ENCODE measurements at regions of chr1 and their contacts with region 1.

Region 1: DNA sequence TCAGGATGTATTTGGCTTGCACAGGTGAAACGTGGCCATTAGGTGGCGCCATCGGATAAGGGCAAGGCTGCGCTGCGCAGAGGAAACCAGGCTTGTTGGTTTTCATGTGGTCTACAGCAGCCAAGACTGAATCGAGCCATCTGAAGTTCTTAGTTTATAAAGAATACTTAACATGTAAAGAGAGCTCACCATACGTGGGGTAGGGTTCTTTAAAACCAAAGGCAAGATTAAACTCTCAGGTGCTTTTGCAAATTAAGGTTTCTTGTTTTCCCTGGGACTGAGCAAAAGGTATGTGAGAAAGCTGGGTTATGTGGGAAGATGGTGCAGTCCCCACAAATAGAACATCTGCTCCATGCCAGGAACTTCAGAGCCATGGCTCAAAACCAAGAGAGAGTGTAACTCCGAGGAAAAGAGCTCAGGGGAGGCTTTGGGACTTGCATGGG is 9.3 kb downstream of the MASP2 start:
- DNase-seq: peak; percentile 68
- H3K4me3 ChIP-seq: no peak overlapping the region
- H3K27ac ChIP-seq: no peak overlapping the region
- H3K4me1 ChIP-seq: no peaks in the 10 kb centered on the region
- H3K27me3 ChIP-seq: no peaks in the 10 kb centered on the region
- CTCF ChIP-seq: peak; percentile 98 to 99

Region 2: DNA sequence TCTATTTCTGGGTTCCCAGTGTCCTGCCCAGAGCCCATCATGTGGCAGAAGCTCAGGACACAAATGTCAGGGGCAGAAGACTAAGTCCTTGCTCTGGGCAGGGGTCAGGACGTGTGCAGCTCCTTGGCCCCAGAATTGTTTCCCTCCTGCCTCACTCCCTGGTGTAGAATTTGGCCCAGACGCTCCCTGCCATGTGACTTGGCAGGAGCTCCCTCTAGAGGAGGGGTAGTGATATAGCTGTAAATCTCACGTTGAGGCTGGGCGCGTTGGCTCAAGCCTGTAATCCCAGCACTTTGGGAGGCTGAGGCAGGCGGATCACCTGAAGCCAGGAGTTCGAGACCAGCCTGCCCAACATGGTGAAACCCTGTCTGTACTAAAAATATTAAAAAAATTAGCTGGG is 326.4 kb after region 1 on chr1:
- CTCF ChIA-PET with region 1: no interaction called
- dilution Hi-C with region 1: no loop called
- in situ Hi-C with region 1: no loop called
- intact Hi-C with region 1: loop called (anchors 1 kb)
- DNase-seq: no peak
- H3K4me3 ChIP-seq: no peak overlapping the region
- H3K27ac ChIP-seq: no peak overlapping the region
- H3K4me1 ChIP-seq: no peaks in the 10 kb centered on the region
- H3K27me3 ChIP-seq: peaks cover 4% of the 10 kb centered on the region
- CTCF ChIP-seq: peak; percentile 32 to 58

Region 3: DNA sequence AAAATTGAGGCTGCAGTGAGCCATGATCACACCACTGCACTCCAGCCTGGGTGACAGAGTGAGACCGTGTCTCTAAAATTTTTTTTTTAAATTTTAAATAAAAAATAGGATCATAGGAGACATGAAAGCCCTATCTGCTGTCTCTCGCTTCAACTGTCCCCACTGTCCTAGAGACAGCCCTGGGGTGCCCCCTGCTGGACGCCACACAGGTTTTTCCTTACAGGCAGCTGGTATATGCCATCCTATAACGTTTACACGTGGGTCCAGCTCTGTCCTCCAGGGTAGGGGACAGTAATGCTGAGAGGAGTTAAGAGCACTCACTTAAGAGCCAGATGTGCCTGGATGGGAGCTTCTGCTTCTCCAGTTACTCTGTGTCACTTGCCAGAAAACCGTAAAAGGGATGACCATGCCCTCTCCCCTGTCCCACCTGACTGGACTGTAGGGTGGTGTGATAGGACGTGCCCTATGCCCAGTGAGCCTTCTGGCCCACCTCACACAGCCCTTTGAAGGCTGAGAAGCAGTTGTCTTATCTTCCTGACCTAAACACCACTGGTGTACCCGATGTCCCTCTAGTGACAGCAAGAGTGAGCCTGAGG is 608.0 kb after region 1 on chr1:
- CTCF ChIA-PET with region 1: interaction called, 9 read pairs
- dilution Hi-C with region 1: no loop called
- in situ Hi-C with region 1: loop called in 1 of 2 experiments (anchors 25 kb)
- intact Hi-C with region 1: loop called (anchors 1 kb)
- DNase-seq: peak; percentile 49
- H3K4me3 ChIP-seq: no peak overlapping the region
- H3K27ac ChIP-seq: no peak overlapping the region
- H3K4me1 ChIP-seq: no peaks in the 10 kb centered on the region
- H3K27me3 ChIP-seq: no peaks in the 10 kb centered on the region
- CTCF ChIP-seq: peak; percentile 71 to 78

Region 4: GRCh38 chr1:11719313-11720032 is 681.7 kb after region 1 on chr1:
- CTCF ChIA-PET with region 1: no interaction called
- dilution Hi-C with region 1: no loop called
- in situ Hi-C with region 1: no loop called
- intact Hi-C with region 1: loop called (anchors 1 kb)
- DNase-seq: no peak
- H3K4me3 ChIP-seq: peak overlapping the region in 2 of 3 experiments; percentile 33 to 43
- H3K27ac ChIP-seq: no peak overlapping the region
- H3K4me1 ChIP-seq: peaks cover 6% of the 10 kb centered on the region
- H3K27me3 ChIP-seq: no peaks in the 10 kb centered on the region
- CTCF ChIP-seq: peak; percentile 88 to 97

Region 5: GRCh38 chr1:11967028-11967547 is 929.3 kb after region 1 on chr1:
- CTCF ChIA-PET with region 1: no interaction called
- dilution Hi-C with region 1: no loop called
- in situ Hi-C with region 1: no loop called
- intact Hi-C with region 1: loop called (anchors 5 kb)
- DNase-seq: peak; percentile 48
- H3K4me3 ChIP-seq: no peak overlapping the region
- H3K27ac ChIP-seq: no peak overlapping the region
- H3K4me1 ChIP-seq: no peaks in the 10 kb centered on the region
- H3K27me3 ChIP-seq: no peaks in the 10 kb centered on the region
- CTCF ChIP-seq: peak; percentile 67 to 86

Measured in mammary epithelial cell (primary cell).